ENCODE measurements at regions of chr11 and their contacts with region 1.

Region 1: DNA sequence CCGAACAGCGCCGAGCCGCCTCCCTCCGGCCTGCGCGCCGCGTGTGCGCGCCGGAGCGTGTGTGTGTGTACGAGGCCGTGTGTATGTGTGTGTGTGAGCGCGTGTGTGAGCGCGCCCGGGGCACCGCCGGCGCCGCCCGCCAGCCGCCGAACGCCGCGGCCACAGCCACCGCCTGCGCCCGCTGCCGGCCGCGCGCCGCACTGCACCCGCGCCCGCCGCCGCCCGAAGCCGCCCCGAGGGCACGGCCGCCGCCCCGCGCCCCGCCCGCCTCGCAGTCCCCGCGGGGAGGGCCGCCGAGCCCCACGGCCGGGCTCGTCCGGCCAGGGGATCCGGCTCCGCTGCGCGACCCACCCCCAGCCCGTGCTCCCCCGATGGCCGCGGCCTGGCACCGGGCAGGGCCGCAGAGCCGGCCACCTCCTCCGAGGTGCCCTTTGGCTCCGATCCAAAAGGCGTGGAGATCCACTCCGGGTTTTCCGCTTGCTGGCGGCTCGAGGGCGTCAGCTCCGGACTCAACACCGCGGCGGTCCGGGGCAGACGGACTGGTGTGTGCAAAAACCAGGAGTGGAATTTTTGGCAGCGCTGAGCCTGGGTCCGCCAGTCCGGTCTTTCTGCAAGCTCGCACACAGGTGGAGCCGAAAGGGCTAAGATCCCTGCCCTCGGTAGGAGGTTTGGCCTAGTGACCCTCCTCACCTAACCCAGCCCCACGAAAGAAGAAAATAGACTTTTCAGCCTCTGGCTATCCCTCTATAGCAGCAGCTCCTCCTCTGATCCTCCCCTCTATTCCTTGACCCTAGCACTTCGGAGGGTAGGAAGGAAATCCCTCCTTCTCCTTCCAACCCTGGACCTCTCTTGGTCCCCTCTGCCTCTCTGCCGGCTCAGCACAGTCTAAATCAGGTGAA is at the start of gene SYT7:
- DNase-seq: peak; percentile 95
- ATAC-seq: peak; percentile 87 to 92
- total RNA-seq, gene SYT7: 36.7 to 39.7 TPM

Region 2: GRCh38 chr11:61532139-61533038 is 48.9 kb before region 1 on chr11:
- intact Hi-C with region 1: loop called in 1 of 2 experiments (anchors 5 kb)
- DNase-seq: no peak
- ATAC-seq: no peak

Region 3: DNA sequence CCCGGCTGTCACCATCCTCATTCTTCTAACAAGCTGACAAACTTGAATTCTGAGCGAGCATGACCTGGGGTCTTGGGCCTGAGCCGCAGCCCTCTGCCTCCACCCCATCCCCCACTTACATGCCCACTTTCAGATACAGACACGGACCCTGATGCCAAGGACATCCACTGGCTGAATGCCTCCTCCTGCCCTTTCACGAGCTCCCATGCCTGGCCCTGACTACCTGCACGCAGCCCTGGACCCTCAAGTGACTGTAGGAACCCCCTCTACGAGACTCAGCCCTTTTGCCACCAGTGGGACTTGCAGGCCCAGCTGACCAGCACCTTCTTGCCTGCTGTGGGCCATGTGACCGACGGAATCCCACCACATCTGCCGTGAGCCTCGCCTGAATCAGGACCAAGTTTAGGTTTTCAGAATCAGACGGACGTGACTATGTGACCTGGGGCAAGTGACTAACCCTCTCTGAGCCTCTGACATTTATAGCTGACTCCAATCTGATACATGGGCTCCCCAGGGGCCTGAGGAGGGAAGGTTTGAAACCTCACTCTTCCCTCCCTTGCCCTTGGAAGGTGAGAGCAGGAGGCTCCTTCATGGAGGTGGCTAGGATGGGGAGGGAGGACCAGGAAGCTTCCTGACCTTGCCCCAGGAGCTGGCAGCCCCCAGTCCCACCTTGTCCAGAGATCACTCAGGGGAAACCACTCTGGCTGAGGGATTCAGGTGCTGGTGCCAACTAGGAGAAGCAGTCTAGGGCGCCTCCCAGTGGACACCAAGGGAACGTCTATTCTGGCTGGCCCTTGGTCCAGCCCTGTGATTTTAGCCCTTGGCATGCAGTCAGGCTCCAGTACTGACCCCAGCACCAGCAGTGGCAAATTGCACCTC is 46.5 kb after region 1 on chr11:
- intact Hi-C with region 1: loop called (anchors 5 kb)
- DNase-seq: peak; percentile 76
- ATAC-seq: peak; percentile 83 to 87

Region 4: DNA sequence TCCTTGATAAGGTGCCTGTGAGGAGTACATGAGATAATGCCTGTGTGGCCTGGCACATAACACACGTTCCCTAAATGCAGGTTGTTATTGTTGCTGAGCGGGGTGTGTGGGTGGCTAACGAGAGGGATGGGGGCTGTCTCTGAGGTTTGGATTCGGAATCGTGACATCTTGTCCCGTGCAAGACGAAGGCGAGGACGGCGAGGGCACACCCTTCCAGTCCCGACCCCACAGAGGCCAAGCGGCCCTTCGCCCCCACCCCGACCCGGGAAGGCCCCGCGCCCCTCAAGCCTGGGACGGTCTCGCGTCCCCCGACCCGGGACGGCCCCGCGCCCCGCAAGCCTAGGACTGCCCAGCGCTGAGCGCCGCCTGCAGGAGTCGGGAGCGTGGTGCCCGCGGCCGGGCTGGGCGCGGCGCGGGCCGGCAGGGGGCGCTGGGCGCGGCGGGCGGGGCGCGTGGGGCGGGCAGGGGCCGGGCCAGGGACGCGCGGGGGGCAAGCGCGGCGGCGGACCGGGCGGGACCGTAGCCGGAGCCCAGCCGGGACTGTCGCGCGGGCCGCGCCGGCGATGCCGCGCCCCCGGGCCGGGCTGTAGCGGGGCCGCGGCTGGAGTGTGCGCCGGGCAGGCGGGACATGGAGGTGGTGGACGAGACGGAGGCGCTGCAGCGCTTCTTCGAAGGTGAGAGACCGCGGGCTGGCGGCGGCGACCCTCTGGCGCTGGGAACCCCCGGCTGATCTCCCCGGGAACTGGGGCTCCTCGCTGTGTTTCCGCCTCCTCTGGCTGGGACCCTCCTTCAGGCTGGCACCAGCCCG is 171.0 kb after region 1 on chr11 and contains the start of gene MYRF:
- intact Hi-C with region 1: no loop called
- DNase-seq: no peak
- ATAC-seq: peak; percentile 23 to 64
- total RNA-seq, gene MYRF: 4.0 to 5.0 TPM